Gastrocnemius medialis (tissue), 4 donors: ENCODE measurements at regions of chr3 and their contacts with region 1.

Region 1: DNA sequence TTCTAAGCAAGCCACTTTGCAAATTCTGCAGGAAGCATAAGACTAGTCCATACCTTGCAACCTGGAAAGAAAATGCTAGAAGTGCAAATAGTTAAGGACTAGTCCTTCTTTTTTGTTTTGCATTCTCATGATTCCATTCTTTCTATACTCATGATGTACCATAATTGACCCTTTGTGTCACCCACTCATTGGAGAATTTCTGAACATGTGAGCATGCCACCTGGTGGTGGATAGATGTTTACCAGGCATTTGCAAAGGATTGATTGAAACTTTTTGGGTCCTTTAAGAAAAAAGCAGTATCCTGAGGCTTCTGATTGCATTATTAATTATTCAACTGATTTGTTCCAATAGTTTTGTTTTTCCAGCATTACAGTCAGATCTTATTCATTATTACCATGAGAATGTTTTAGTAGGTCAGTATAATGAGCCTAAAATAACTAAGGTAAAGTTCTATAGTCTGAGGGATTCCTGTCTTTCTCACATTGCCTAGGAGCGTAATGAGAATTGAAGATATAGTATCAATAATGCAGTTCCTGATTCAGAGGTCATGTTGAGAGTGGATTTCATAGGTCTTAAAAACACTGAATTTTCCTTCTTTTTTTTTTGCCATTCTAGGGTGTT is 20.2 kb upstream of the DIPK2A start:
- DNase-seq: no peak
- ATAC-seq: no peak
- H3K4me3 ChIP-seq: no peak overlapping the region
- H3K27ac ChIP-seq: no peak overlapping the region
- H3K4me1 ChIP-seq: no peaks in the 10 kb centered on the region
- H3K27me3 ChIP-seq: no peaks in the 10 kb centered on the region
- CTCF ChIP-seq: peak; percentile 7 to 56 (median 37)
- POLR2A ChIP-seq: no peak

Region 2: GRCh38 chr3:143571548-143571947 is 379.9 kb before region 1 on chr3:
- in situ Hi-C with region 1: no loop called
- intact Hi-C with region 1: no loop called
- DNase-seq: no peak
- ATAC-seq: no peak
- H3K4me3 ChIP-seq: no peak overlapping the region
- H3K27ac ChIP-seq: no peak overlapping the region
- H3K4me1 ChIP-seq: no peaks in the 10 kb centered on the region
- H3K27me3 ChIP-seq: no peaks in the 10 kb centered on the region
- CTCF ChIP-seq: no peak
- POLR2A ChIP-seq: no peak

Region 3: DNA sequence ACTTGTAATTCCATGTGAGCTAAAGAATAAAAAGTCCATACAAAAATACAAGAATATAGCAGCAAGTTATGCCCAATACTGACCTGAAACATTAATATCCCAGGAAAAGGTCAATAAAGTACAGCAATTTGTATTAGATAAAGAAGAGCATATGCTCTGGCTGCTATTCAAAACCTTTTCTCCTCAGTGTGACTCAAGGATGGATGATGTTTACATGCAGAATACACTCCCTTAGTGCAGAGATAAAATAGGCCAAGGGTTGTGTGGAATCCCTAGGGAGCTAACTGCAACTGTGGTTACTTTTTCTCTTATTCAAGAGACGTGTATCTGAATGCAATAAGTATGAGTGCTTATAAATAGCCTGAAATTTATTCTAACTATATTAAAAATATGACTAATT is 181.8 kb before region 1 on chr3:
- in situ Hi-C with region 1: loop called in 1 of 4 experiments (anchors 5 kb)
- intact Hi-C with region 1: no loop called
- DNase-seq: no peak
- ATAC-seq: no peak
- H3K4me3 ChIP-seq: no peak overlapping the region
- H3K27ac ChIP-seq: no peak overlapping the region
- H3K4me1 ChIP-seq: no peaks in the 10 kb centered on the region
- H3K27me3 ChIP-seq: no peaks in the 10 kb centered on the region
- CTCF ChIP-seq: no peak
- POLR2A ChIP-seq: no peak

Region 4: DNA sequence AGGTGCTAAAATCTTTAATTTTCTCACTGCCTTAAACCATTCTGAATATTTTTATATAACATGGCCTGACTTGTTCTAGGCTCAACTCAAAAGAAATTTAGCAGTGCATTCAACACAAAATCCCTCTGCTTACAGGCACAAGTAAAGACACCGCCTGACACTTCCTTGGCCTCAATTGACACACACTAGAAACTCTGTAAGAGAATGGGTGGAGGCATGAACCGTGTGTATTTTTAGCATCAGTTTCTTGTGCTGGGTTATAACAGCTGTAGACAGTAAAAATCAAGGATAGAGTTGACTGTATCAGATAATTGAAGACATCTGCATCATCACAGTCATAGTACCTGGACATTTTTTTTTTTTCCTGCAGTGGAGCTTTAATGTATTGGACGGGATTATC is 157.5 kb before region 1 on chr3:
- in situ Hi-C with region 1: loop called in 2 of 4 experiments (anchors 25 kb)
- intact Hi-C with region 1: loop called (anchors 5 kb)
- DNase-seq: no peak
- ATAC-seq: no peak
- H3K4me3 ChIP-seq: no peak overlapping the region
- H3K27ac ChIP-seq: no peak overlapping the region
- H3K4me1 ChIP-seq: peaks cover 0 to 7% of the 10 kb centered on the region in 2 donors
- H3K27me3 ChIP-seq: no peaks in the 10 kb centered on the region
- CTCF ChIP-seq: no peak
- POLR2A ChIP-seq: no peak